PC-3 (cell line): ENCODE measurements at regions of chr5 and their contacts with region 1.

Region 1: DNA sequence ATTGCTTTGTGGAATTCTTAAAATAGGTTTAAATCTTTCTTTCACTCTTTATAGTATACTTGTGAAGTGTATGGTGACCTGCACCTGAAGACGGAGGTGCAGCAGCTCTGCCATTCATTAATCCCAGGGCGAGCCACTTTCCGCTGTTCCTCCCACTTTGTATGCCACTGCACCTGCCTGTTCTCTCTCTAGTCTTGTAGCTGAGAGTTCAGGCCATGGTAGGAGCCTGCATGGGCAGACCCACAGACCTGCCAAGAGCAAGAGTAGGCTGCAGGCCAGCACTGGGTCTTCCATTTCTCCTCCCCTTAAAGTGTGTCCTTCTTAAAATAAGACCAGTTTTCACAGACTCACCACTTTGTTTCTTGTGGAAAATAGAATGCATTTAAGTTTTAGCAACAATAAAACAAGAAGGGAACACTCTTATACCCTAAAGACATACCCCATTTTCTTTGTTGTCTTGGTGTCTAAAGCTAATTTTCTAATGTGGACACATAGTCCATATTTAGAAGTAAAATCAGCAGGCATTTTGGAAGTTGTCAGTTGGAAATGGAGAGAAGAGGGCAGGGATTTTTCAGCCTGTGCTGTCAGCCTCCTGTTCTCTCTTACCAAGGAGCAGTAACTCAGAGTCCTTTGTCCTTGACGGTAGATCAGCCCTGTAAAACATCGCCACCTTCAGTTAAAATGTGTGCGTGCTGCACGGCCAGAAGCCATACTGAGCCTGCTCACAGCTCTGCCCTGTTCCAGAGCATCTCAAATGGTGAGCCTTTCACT is 103.2 kb downstream of the SNCAIP start:
- DNase-seq: peak; percentile 61
- ATAC-seq: peak; percentile 81
- H3K4me3 ChIP-seq: no peak overlapping the region
- H3K27ac ChIP-seq: no peak overlapping the region
- H3K4me1 ChIP-seq: no peaks in the 10 kb centered on the region
- H3K27me3 ChIP-seq: no peaks in the 10 kb centered on the region
- CTCF ChIP-seq: peak; percentile 61

Region 2: DNA sequence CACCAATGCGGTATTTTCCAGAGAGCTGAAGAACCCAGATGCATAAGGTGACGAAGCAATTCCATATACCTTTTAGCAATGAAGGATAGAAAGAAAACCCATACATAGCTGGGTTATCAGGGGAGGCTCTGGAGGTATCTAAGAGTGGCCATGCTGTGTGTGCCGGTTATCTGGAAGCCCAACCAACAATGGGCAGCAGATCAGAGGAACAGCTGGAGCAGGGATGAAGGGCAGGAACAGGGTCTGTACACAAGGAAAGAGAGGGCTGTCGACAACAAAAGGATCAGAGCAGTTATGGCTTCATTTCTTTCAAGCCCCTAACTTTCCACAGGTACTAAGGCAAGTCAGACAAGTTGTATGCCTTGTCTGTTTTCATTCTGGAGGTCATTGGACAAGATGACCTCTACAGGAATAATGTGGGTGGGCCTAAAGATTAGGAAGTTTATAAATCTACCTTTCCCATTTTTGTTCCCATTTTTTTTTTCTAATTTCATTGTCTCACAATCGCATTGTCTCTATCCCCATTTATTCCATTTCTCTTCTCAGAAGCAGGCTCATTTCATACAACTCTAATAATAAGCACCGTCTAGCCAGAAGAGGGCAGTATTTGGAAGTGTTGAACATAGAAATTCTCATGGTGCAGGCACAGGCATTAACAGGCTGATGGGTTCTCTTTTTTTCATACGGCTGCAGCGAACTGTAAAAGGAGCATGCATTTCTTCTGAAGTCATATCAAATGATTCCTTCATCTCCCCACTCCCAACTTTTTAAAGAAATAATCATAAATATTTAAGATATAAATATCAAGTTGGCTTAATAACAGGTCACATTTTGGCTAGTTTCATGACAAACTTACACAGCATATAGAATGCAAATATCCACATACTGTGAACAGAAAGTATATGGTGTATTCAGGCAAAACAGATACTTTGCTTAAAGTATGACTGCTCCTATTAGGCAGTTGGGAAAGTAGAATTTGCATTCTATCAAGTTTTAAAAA is 222.4 kb before region 1 on chr5:
- CTCF ChIA-PET with region 1: no interaction called
- POLR2A ChIA-PET with region 1: no interaction called
- intact Hi-C with region 1: loop called (anchors 1 kb)
- DNase-seq: peak; percentile 65
- ATAC-seq: peak; percentile 75
- H3K4me3 ChIP-seq: no peak overlapping the region
- H3K27ac ChIP-seq: no peak overlapping the region
- H3K4me1 ChIP-seq: no peaks in the 10 kb centered on the region
- H3K27me3 ChIP-seq: 0 out of 2 replicates have a peak, but pooled peaks cover under 1% of the 10 kb centered on the region
- CTCF ChIP-seq: peak; percentile 65

Region 3: DNA sequence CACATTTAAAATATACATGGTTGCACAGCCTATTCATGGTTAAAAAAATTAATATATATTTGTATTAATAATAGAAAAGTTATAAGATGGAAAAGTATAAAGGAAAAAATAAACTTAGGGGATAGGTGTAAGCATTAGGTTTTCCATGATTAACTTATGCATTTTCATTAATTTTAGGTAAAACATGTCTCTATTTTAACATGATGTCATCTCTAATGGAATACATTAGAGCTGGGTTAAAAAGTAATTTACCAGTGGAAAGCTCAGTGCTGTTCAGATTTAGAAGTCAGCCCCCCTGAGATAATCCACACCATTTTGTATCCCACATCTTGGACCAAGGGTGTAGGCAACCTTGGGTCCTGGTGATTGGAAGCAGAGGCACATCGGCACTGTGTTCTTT is 479.9 kb after region 1 on chr5:
- CTCF ChIA-PET with region 1: no interaction called
- POLR2A ChIA-PET with region 1: no interaction called
- intact Hi-C with region 1: no loop called
- DNase-seq: no peak
- ATAC-seq: no peak
- H3K4me3 ChIP-seq: no peak overlapping the region
- H3K27ac ChIP-seq: no peak overlapping the region
- H3K4me1 ChIP-seq: no peaks in the 10 kb centered on the region
- H3K27me3 ChIP-seq: no peaks in the 10 kb centered on the region
- CTCF ChIP-seq: no peak